CD8-positive, alpha-beta T cell (primary cell): ENCODE measurements at regions of chr1 and their contacts with region 1.

Region 1: GRCh38 chr1:39214998-39215873 is 10.7 kb downstream of the MACF1 start:
- DNase-seq: peak in 7 of 9 experiments; percentile 20 to 73 (median 58)
- ATAC-seq: peak; percentile 75
- H3K4me3 ChIP-seq: peak overlapping the region; percentile 54 to 64
- H3K4me3 Mint-ChIP-seq: peak overlapping the region; percentile 89
- H3K27ac ChIP-seq: peak overlapping the region; percentile 34 to 81
- H3K27ac Mint-ChIP-seq: peak overlapping the region; percentile 92
- H3K4me1 ChIP-seq: peaks cover 48% of the 10 kb centered on the region
- H3K4me1 Mint-ChIP-seq: peaks cover 61% of the 10 kb centered on the region
- H3K27me3 ChIP-seq: no peaks in the 10 kb centered on the region
- H3K27me3 Mint-ChIP-seq: no peaks in the 10 kb centered on the region
- CTCF ChIP-seq: no peak

Region 2: DNA sequence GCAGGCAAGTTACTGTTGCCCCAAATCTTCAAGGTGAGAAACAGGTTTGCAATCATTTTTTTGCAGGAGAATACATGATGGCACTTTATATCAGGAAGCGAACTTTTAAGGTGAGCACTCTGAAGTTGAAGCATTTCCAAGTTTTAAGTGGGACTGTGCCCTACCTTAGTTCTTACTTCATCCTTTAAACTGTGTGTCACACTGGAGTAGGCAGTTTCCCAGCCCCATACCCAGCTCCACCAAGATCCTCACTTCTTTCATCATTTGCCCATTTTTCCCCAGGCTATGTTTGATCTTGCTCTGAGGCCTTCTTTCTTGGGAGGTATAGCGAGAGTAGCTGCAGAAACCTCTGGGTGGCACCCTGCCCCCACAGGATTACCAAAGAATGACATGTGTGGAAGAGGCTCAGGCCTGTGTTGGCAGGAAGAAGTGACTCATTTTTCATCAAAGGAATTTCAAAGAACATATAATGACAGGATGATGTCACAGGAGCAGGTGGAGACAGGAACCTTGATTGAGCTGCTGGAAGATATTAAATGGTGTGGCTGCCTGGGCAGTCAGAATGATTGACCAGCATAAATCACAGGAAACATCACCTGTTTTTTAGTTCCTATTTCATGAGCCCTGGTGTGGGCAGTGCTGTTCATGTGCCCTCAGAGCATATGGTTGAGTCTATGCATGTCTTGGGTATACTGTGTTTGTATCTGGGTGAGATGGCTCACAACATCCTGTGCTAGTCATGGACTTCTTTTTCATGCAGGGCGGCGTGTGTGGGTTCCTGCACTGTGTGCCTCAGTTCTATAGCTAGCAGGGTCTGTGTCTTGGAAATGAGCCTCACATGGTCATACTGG is 31.5 kb before region 1 on chr1:
- CTCF ChIA-PET with region 1: interaction called, 5 read pairs
- POLR2A ChIA-PET with region 1: no interaction called
- intact Hi-C with region 1: loop called in 1 of 2 experiments (anchors 5 kb)
- DNase-seq: peak; percentile 60 to 93 (median 83)
- ATAC-seq: peak; percentile 87
- H3K4me3 ChIP-seq: no peak overlapping the region
- H3K4me3 Mint-ChIP-seq: no peak overlapping the region
- H3K27ac ChIP-seq: peak overlapping the region; percentile 46 to 69
- H3K27ac Mint-ChIP-seq: peak overlapping the region; percentile 97
- H3K4me1 ChIP-seq: peaks cover 20% of the 10 kb centered on the region
- H3K4me1 Mint-ChIP-seq: peaks cover 34% of the 10 kb centered on the region
- H3K27me3 ChIP-seq: no peaks in the 10 kb centered on the region
- H3K27me3 Mint-ChIP-seq: no peaks in the 10 kb centered on the region
- CTCF ChIP-seq: peak; percentile 71

Region 3: DNA sequence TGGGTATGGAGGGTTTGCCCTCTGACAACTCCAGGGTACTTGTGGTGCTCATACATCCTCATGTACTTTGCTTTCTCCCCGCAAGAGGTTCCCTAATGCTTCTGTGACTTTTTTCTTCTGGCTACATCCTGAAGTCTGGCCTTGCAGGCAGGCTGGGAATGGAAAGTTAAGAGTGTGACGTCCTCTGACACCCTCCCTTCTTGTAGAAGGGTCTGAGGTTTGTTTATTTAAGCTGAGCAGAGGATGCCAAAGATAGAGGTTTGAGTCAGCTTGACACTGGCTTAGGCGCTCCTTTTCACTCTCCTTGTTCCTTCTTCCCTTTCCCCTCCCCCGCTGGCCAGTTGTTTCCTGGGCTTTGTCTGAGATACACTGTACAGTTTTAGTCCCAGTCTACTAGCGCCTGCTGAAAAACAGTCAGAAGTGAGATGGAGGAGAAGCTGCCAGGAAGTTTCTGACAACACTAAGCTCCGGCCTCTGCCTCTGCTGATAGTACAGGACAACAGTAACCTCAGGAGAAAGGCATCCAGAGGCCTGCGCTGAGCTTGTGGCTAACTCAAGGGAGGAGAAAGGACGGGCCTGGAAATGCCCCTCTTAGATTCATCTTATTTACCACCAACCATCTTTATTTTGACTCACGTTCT is 10.7 kb before region 1 on chr1 and contains the start of gene MACF1:
- CTCF ChIA-PET with region 1: interaction called, 10 read pairs
- POLR2A ChIA-PET with region 1: interaction called, 14 read pairs
- intact Hi-C with region 1: loop called in 1 of 2 experiments (anchors 2 kb)
- DNase-seq: peak in 7 of 9 experiments; percentile 9 to 70 (median 44)
- ATAC-seq: peak; percentile 54
- H3K4me3 ChIP-seq: peak within 1 kb of the TSS; percentile 38 to 50
- H3K4me3 Mint-ChIP-seq: peak within 1 kb of the TSS; percentile 87
- H3K27ac ChIP-seq: peak within 1 kb of the TSS; percentile 38 to 81
- H3K27ac Mint-ChIP-seq: peak within 1 kb of the TSS; percentile 95
- H3K4me1 ChIP-seq: peaks cover 45% of the 10 kb centered on the region
- H3K4me1 Mint-ChIP-seq: peaks cover 64% of the 10 kb centered on the region
- H3K27me3 ChIP-seq: no peaks in the 10 kb centered on the region
- H3K27me3 Mint-ChIP-seq: no peaks in the 10 kb centered on the region
- CTCF ChIP-seq: no peak
- total RNA-seq, gene MACF1: 184 to 193 TPM

Region 4: GRCh38 chr1:39230261-39231190 is 15.3 kb after region 1 on chr1:
- CTCF ChIA-PET with region 1: interaction called, 3 read pairs
- POLR2A ChIA-PET with region 1: interaction called, 11 read pairs
- intact Hi-C with region 1: no loop called
- DNase-seq: peak in 3 of 9 experiments; percentile 19 to 45 (median 24)
- ATAC-seq: peak; percentile 49
- H3K4me3 ChIP-seq: no peak overlapping the region
- H3K4me3 Mint-ChIP-seq: peak overlapping the region; percentile 16
- H3K27ac ChIP-seq: peak overlapping the region in 1 of 2 experiments; percentile 73
- H3K27ac Mint-ChIP-seq: peak overlapping the region; percentile 79
- H3K4me1 ChIP-seq: peaks cover 32% of the 10 kb centered on the region
- H3K4me1 Mint-ChIP-seq: peaks cover 59% of the 10 kb centered on the region
- H3K27me3 ChIP-seq: no peaks in the 10 kb centered on the region
- H3K27me3 Mint-ChIP-seq: no peaks in the 10 kb centered on the region
- CTCF ChIP-seq: no peak

Region 5: DNA sequence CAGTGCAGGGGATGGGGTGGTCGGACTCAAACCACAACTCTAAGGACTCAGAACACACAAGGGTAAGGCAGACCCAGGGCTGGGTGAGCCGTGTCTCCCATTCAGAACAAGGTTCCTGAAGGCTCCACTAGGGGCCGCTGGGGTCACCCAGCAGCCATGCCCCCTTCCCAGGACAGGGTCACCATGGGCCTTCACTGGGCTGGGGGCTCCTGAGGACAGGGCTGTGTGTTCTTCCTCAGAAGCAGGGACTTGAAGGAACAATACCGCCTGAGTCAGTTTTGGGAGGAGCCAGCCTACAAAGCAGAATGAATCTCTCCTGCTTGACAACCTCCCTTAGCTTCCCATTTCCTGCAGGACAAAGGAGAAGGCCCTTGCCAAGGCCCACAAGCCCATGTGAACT is 1434.8 kb after region 1 on chr1:
- CTCF ChIA-PET with region 1: no interaction called
- POLR2A ChIA-PET with region 1: no interaction called
- intact Hi-C with region 1: no loop called
- DNase-seq: peak in 1 of 9 experiments; percentile 20
- ATAC-seq: no peak
- H3K4me3 ChIP-seq: no peak overlapping the region
- H3K4me3 Mint-ChIP-seq: no peak overlapping the region
- H3K27ac ChIP-seq: no peak overlapping the region
- H3K27ac Mint-ChIP-seq: no peak overlapping the region
- H3K4me1 ChIP-seq: peaks cover 6% of the 10 kb centered on the region
- H3K4me1 Mint-ChIP-seq: peaks cover 6% of the 10 kb centered on the region
- H3K27me3 ChIP-seq: no peaks in the 10 kb centered on the region
- H3K27me3 Mint-ChIP-seq: peaks cover 9% of the 10 kb centered on the region
- CTCF ChIP-seq: no peak